ENCODE measurements at regions of chr16 and their contacts with region 1.

Region 1: GRCh38 chr16:46883690-46884512 is at the start of gene GPT2:
- DNase-seq: peak; percentile 90

Region 2: GRCh38 chr16:46871587-46871986 is 12.3 kb before region 1 on chr16:
- CTCF ChIA-PET with region 1: no interaction called
- POLR2A ChIA-PET with region 1: interaction called, 12 read pairs
- DNase-seq: no peak

Region 3: GRCh38 chr16:46896314-46896968 is 12.5 kb after region 1 on chr16:
- CTCF ChIA-PET with region 1: interaction called, 3 read pairs
- POLR2A ChIA-PET with region 1: interaction called, 10 read pairs
- DNase-seq: no peak

Measured in HEK293T (cell line).